HCT116 (cell line): ENCODE measurements at regions of chr4 and their contacts with region 1.

Region 1: DNA sequence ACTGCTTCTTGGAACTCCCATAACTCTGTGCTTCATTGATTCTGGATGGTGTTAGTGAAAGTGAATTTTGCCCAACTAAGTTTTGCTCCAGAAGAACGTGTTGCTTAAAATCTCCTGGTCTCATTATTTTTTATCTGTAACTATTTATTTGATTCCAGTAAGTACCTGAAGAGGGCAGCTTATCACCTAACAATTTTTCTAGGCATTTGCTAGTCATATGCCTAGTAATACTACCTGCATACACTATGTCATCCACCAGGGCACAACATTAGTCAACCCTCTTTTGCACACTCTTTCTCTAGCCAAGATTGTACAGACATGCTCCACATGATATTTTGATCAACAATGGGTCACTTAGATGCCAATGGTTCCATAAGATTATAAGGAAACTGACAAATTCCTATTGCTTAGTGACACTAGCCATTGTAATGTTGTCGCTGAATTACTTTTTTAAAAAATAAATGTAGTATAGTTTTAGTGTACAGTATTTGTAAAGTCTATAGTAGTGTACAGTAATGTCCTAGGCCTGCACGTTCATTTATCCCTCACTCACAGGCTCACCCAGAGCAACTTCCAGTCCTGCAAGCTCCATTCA is 499.9 kb upstream of the AADAT start:
- DNase-seq: peak; percentile 51
- ATAC-seq: peak; percentile 99
- H3K4me3 ChIP-seq: no peak overlapping the region
- H3K27ac ChIP-seq: no peak overlapping the region
- H3K4me1 ChIP-seq: no peaks in the 10 kb centered on the region
- H3K27me3 ChIP-seq: no peaks in the 10 kb centered on the region
- CTCF ChIP-seq: peak; percentile 60 to 86 (median 68)
- POLR2A ChIP-seq: no peak
- RAD21 ChIP-seq: peak; percentile 77

Region 2: GRCh38 chr4:170949084-170949483 is 359.4 kb after region 1 on chr4:
- CTCF ChIA-PET with region 1: no interaction called
- POLR2A ChIA-PET with region 1: no interaction called
- RAD21 ChIA-PET with region 1: no interaction called
- intact Hi-C with region 1: no loop called
- DNase-seq: no peak
- ATAC-seq: no peak
- H3K4me3 ChIP-seq: no peak overlapping the region
- H3K27ac ChIP-seq: no peak overlapping the region
- H3K4me1 ChIP-seq: no peaks in the 10 kb centered on the region
- H3K27me3 ChIP-seq: no peaks in the 10 kb centered on the region
- CTCF ChIP-seq: no peak
- POLR2A ChIP-seq: no peak
- RAD21 ChIP-seq: no peak

Region 3: DNA sequence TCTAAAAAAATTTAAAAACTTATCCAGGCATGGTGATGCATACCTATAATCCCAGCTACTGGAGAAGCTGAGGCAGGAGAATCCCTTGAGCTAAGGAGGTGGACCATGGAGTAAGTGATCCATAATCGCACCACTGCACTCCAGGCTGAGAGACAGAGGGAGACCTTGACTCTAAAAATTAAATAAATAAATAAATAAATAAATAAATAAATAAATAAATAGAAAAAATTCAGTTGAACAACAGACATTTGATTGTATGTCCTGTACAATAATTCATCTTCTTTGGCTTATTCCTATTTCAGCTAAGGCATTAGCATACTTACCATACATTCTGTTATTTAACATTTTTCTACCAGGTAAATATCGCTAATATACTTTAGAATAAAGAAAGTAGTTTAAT is 497.4 kb after region 1 on chr4:
- CTCF ChIA-PET with region 1: no interaction called
- POLR2A ChIA-PET with region 1: no interaction called
- RAD21 ChIA-PET with region 1: no interaction called
- intact Hi-C with region 1: no loop called
- DNase-seq: no peak
- ATAC-seq: no peak
- H3K4me3 ChIP-seq: no peak overlapping the region
- H3K27ac ChIP-seq: no peak overlapping the region
- H3K4me1 ChIP-seq: no peaks in the 10 kb centered on the region
- H3K27me3 ChIP-seq: no peaks in the 10 kb centered on the region
- CTCF ChIP-seq: no peak
- POLR2A ChIP-seq: no peak
- RAD21 ChIP-seq: no peak

Region 4: DNA sequence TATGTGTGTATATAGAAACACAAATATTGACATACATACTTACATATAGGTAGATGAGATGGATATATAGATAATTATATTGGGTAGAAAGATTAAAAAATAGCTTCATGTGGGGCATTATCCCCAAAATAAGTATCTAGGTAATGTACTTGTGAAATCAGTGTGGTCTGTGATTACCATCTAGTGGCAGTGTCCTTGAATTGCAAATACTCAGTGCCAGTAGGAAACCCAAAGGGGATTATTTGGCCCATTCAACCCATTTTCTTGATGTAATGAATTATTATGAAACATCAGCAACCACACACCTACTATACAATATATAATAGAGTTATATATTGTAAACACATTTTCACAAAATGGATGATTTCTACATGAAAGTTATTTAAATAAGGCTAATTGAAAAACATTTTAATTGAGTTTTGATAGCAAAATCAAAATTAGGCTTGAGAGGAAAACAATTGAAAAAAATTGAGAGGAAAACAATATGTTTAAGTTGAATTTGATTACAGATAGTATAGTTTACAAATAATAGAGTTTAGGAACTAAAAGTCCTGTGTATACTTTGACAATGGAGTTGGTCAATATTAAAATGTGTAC is 1612.9 kb after region 1 on chr4:
- CTCF ChIA-PET with region 1: no interaction called
- POLR2A ChIA-PET with region 1: no interaction called
- RAD21 ChIA-PET with region 1: no interaction called
- intact Hi-C with region 1: loop called (anchors 5 kb)
- DNase-seq: peak; percentile 32
- ATAC-seq: peak; percentile 67
- H3K4me3 ChIP-seq: no peak overlapping the region
- H3K27ac ChIP-seq: no peak overlapping the region
- H3K4me1 ChIP-seq: no peaks in the 10 kb centered on the region
- H3K27me3 ChIP-seq: no peaks in the 10 kb centered on the region
- CTCF ChIP-seq: peak; percentile 56 to 75 (median 63)
- POLR2A ChIP-seq: no peak
- RAD21 ChIP-seq: peak; percentile 83